Activated CD4-positive, alpha-beta memory T cell treated with anti-CD3 and anti-CD28 coated beads, Interleukin-2, amount 10 ng/mL, durations not matched to agents 7 days and 5 days (primary cell): ENCODE measurements at regions of chr1 and their contacts with region 1.

Region 1: DNA sequence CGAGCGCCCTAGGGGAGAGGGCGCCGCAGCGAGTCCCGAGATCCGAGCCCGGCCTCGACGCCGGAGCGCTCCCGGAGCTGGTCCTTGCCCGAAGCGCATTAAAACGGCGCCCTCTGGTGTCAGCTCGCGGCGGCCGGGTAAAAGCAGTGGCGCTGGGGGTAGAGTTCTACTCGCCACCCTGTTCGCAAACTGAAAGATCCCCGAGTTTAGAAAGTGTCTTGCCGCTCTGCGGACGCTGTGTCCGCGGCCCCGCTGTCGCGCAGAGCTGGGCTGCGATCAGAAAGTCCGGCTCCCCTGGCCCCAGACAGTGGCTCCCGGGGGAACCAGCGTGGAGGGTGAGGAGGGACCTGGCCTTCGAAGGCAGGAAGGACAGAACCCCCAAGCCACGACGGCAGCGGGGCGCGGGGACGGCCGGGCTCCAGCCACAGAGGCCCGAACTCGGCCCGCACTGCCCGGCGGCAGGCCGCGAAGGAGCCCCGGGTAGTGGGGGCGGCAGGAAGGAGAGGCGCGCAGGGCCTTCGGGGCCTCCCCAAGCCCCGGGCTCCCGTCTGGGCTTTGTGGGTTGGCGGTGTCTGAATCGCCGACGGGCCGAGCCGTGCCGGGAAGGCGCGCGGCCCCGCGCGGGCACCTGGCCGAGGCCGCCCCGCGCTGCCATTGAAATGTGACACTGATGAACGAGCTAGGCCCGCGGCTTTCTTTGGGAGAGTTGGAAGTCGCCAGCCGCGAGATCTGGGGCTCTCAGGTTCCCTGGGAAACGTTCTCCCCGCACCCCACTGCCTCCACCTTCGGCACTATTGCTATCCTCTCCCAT is 39.1 kb upstream of the NFIA start:
- DNase-seq: peak; percentile 85
- H3K4me3 Mint-ChIP-seq: peak overlapping the region; percentile 70
- H3K27ac Mint-ChIP-seq: no peak overlapping the region
- H3K4me1 Mint-ChIP-seq: peaks cover 3% of the 10 kb centered on the region
- H3K27me3 Mint-ChIP-seq: peaks cover 40% of the 10 kb centered on the region

Region 2: GRCh38 chr1:60732977-60733401 is 310.2 kb before region 1 on chr1:
- CTCF ChIA-PET with region 1: no interaction called
- POLR2A ChIA-PET with region 1: no interaction called
- DNase-seq: no peak
- H3K4me3 Mint-ChIP-seq: no peak overlapping the region
- H3K27ac Mint-ChIP-seq: no peak overlapping the region
- H3K4me1 Mint-ChIP-seq: no peaks in the 10 kb centered on the region
- H3K27me3 Mint-ChIP-seq: no peaks in the 10 kb centered on the region

Region 3: DNA sequence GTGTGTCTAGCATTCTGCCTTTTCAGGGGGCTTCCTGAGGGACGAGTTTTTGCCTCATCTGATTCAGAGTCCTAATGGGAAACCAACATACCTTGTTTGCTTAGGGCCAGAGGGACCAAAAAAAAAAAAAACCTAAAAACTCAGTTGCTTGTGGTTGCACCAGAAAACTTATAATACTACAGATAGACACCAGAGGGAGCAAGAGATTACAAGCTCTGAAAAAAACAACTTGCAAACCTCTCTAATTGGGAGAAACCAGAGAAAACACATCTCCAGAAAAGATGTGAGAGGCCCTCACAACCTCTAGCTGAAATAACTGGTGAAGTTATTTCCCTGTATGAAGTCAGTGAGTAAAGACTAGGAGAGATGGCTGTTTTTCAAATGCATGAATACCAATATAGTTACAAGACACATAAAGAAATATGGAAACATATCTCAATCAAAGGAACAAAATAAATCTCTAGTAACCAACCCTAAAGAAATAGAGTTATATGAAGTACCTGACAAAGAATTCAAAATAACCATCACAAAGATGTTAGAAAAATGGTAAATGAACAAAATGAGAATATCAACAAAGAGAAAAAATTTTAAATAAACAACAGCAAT is 194.5 kb before region 1 on chr1:
- CTCF ChIA-PET with region 1: interaction called, 20 read pairs
- POLR2A ChIA-PET with region 1: no interaction called
- DNase-seq: no peak
- H3K4me3 Mint-ChIP-seq: no peak overlapping the region
- H3K27ac Mint-ChIP-seq: no peak overlapping the region
- H3K4me1 Mint-ChIP-seq: no peaks in the 10 kb centered on the region
- H3K27me3 Mint-ChIP-seq: peaks cover 14% of the 10 kb centered on the region

Region 4: DNA sequence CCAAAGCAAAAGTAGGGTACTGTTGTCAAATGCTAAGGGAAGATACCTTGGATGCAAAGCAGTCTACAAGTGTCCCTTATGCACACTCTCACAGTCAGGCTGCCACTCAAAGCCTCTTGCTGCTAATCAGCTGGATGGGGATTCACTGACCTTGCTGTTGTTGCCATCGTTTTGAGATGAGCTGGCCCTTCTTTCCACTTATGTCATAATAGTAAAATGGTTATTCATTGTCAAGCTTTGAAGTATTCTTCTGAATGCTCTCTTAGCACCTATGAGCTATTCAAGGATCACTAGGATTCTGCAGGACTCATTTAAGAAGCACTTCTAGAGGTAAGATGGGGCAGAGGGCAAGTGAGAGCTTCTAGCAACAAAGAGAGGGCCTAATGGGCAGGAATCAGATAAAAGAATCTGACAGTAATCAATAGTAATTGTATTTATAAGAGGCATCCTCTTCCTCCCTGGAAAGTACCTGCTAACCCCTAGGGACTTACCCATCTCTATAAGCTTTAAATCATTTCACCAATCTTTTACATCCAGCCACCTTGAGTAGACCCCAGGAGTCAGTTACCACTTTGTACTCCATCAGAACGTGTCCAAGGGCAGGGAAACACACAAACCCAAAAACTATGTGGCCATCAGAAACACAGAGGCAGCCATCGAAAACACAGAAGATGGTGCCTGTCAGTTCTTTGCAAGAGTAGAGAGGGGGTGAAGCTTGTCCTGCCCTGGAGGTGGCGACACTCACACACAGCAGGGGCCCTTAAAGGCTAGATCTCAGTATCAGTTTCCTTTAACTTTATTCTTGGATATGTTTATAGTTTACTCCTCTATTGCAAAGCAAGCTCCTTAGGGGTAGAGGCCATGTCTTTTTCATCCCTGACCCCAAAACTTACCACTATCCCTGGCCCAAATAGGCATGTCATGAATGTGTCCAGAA is 64.5 kb before region 1 on chr1:
- CTCF ChIA-PET with region 1: interaction called, 21 read pairs
- POLR2A ChIA-PET with region 1: interaction called, 3 read pairs
- DNase-seq: peak; percentile 40
- H3K4me3 Mint-ChIP-seq: no peak overlapping the region
- H3K27ac Mint-ChIP-seq: no peak overlapping the region
- H3K4me1 Mint-ChIP-seq: peaks cover 2% of the 10 kb centered on the region
- H3K27me3 Mint-ChIP-seq: peaks cover 10% of the 10 kb centered on the region